Caco-2 (cell line): ENCODE measurements at regions of chr19 and their contacts with region 1.

Region 1: DNA sequence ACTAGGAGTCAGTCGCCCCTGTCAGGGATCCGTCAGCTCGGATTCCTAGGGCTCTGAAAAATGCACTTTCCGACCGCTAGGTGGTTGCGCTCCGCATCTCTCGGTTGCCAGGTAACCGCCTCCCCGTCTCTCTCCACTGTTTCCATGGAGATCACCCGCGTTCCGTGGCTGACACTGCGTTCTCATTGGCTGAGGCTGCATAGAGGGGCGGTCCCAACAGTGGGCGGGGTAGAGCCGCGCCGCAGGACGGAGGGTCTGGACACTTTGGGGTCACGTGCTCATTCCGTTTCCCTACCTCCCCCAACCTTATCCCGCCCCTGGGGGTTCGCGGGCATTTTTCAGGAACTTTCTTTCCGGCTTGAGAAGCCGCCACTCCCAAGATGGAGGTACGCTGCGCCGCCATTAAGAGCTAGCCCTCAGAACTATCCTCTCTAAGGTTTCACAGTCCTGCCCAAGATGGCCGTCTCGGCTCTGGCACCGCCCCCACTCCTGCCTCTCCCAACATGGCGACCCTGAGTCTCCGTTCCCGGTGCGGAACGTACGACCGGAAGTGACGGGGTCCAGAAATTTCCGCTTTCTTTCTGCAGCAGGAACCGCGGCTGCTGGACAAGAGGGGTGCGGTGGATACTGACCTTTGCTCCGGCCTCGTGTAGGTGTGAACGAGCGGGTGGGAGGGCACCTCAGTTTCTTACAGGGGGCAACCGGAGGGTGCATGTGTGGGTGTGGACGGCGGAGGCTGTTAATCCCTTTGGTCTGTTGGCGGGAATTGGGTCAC is at the starts of genes ODAD3 and PRKCSH:
- DNase-seq: peak; percentile 99
- H3K4me3 ChIP-seq: peak within 1 kb of the TSS; percentile 86
- H3K4me3 Mint-ChIP-seq: peak within 1 kb of the TSS; percentile 100
- H3K27ac Mint-ChIP-seq: peak within 1 kb of the TSS; percentile 100
- H3K4me1 ChIP-seq: 0 out of 2 replicates have a peak, but pooled peaks cover 3% of the 10 kb centered on the region
- H3K4me1 Mint-ChIP-seq: no peaks in the 10 kb centered on the region
- H3K27me3 ChIP-seq: no peaks in the 10 kb centered on the region
- H3K27me3 Mint-ChIP-seq: no peaks in the 10 kb centered on the region
- CTCF ChIP-seq: peak; percentile 84 to 90
- total RNA-seq, gene ODAD3: not detected in 2 replicates
- total RNA-seq, gene PRKCSH: 412 and 456 TPM in 2 replicates

Region 2: DNA sequence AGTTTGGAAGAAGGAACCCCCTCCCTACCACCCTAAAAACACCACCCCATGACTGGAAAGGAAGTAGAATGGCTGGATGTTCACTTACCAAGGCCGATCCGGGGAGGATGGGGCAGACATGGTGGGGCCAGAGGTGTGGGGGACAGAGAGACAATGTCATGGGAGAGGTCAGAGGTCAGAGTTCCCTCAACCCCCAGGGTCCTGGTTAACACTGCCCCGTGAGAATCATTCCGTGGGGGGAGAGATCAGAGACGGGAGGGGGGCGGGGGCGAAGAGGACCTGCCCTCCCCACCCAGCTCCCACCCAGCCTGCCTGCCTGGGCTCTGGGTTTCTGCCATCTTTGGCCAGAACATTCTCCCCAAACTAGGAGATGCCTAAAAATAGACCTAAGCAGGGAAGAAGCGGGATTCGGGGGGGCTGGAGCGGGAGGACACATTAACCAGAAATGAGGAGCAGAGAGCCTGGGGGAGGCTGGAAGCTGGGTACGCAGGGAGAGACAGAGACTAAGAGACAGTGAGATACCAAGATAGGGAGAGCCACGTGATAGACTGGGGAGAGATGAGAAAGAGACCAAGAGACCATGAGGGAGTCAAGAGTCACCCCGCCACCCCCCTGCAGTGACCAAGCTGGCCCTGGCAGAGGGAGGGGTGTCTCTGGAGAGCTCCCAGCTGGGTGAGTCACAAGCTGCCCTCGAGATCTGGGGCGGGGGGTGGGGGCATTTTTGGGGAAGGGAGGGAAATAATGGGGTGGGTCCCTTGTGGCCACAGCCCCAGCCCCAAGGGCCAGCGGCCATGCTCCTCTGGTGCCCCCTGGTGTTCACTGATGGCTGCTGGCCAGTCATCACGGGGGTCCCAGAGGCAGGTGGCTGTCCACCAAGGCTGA is 231.8 kb before region 1 on chr19:
- CTCF ChIA-PET with region 1: no interaction called
- POLR2A ChIA-PET with region 1: no interaction called
- intact Hi-C with region 1: no loop called
- DNase-seq: peak in 1 of 2 experiments; percentile 73
- H3K4me3 ChIP-seq: no peak overlapping the region
- H3K4me3 Mint-ChIP-seq: no peak overlapping the region
- H3K27ac Mint-ChIP-seq: no peak overlapping the region
- H3K4me1 ChIP-seq: no peaks in the 10 kb centered on the region
- H3K4me1 Mint-ChIP-seq: peaks cover 6% of the 10 kb centered on the region
- H3K27me3 ChIP-seq: no peaks in the 10 kb centered on the region
- H3K27me3 Mint-ChIP-seq: no peaks in the 10 kb centered on the region
- CTCF ChIP-seq: peak; percentile 81 to 84

Region 3: DNA sequence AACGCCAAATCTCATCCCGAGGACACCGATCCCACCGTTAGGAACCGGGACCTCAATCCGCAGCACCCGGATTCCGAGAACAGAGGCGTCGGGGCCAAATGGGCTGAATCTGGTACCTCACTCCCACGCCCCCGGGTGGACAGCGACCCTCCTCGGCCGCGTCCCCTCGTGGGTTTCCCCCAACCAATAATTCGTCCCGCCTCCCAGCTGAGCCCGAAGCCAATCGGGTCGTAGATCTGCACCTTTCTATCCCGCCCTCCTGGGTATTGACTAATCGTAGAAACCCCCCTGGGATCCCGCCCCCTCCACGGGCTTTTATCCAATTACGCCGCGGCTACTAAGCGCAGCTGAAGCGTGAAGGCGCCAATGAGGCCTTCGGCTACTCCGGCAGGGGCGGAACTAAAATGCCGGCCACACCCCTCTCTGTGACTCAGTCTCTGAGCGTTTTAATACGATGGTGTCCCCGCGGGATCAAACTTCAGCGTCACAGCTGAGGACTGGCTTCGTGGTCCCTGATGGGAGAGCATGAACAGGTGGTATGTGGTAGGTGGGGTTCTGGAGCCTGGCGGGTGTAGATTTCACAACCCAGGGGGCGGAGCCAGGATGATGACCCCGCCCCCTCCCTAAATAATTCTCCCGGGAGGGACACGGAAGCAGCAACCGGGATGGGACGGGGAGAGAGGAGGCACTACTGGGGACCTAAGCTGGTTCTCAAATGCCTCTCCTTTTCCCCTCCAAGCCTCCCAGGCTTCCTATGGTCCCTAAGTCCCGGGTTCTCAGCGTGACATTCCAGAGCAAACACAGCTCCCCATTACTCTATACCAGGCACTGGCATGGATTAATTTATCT is 88.9 kb before region 1 on chr19 and contains the starts of genes CCDC159 and TMEM205:
- CTCF ChIA-PET with region 1: interaction called, 4 read pairs
- POLR2A ChIA-PET with region 1: no interaction called
- intact Hi-C with region 1: loop called (anchors 1 kb)
- DNase-seq: peak; percentile 97 to 98
- H3K4me3 ChIP-seq: peak within 1 kb of the TSS; percentile 47
- H3K4me3 Mint-ChIP-seq: peak within 1 kb of the TSS; percentile 94
- H3K27ac Mint-ChIP-seq: peak within 1 kb of the TSS; percentile 92
- H3K4me1 ChIP-seq: peaks cover 17% of the 10 kb centered on the region
- H3K4me1 Mint-ChIP-seq: peaks cover 29% of the 10 kb centered on the region
- H3K27me3 ChIP-seq: no peaks in the 10 kb centered on the region
- H3K27me3 Mint-ChIP-seq: no peaks in the 10 kb centered on the region
- CTCF ChIP-seq: peak in 1 of 2 experiments; percentile 1
- total RNA-seq, gene CCDC159: 11.7 and 13.9 TPM in 2 replicates
- total RNA-seq, gene TMEM205: 68.3 and 76.1 TPM in 2 replicates

Region 4: GRCh38 chr19:11374433-11375142 is 60.7 kb before region 1 on chr19 and contains the start of gene SWSAP1:
- CTCF ChIA-PET with region 1: interaction called, 14 read pairs
- POLR2A ChIA-PET with region 1: interaction called, 14 read pairs
- intact Hi-C with region 1: no loop called
- DNase-seq: peak; percentile 97 to 98
- H3K4me3 ChIP-seq: peak within 1 kb of the TSS; percentile 85
- H3K4me3 Mint-ChIP-seq: peak within 1 kb of the TSS; percentile 41
- H3K27ac Mint-ChIP-seq: peak within 1 kb of the TSS; percentile 8
- H3K4me1 ChIP-seq: peaks cover 10% of the 10 kb centered on the region; the same call in 1 of the 2 replicates
- H3K4me1 Mint-ChIP-seq: no peaks in the 10 kb centered on the region
- H3K27me3 ChIP-seq: no peaks in the 10 kb centered on the region
- H3K27me3 Mint-ChIP-seq: no peaks in the 10 kb centered on the region
- CTCF ChIP-seq: no peak
- total RNA-seq, gene SWSAP1: 3.7 and 3.9 TPM in 2 replicates

Region 5: GRCh38 chr19:11390933-11391680 is 44.1 kb before region 1 on chr19:
- CTCF ChIA-PET with region 1: interaction called, 11 read pairs
- POLR2A ChIA-PET with region 1: no interaction called
- intact Hi-C with region 1: no loop called
- DNase-seq: no peak
- H3K4me3 ChIP-seq: no peak overlapping the region
- H3K4me3 Mint-ChIP-seq: no peak overlapping the region
- H3K27ac Mint-ChIP-seq: no peak overlapping the region
- H3K4me1 ChIP-seq: no peaks in the 10 kb centered on the region
- H3K4me1 Mint-ChIP-seq: peaks cover 6% of the 10 kb centered on the region
- H3K27me3 ChIP-seq: no peaks in the 10 kb centered on the region
- H3K27me3 Mint-ChIP-seq: no peaks in the 10 kb centered on the region
- CTCF ChIP-seq: no peak

Region 6: GRCh38 chr19:11418549-11419506 is 16.4 kb before region 1 on chr19 and contains the start of gene RGL3:
- CTCF ChIA-PET with region 1: interaction called, 17 read pairs
- POLR2A ChIA-PET with region 1: interaction called, 7 read pairs
- intact Hi-C with region 1: no loop called
- DNase-seq: peak; percentile 81 to 84
- H3K4me3 ChIP-seq: peak within 1 kb of the TSS; percentile 58
- H3K4me3 Mint-ChIP-seq: peak within 1 kb of the TSS; percentile 92
- H3K27ac Mint-ChIP-seq: peak within 1 kb of the TSS; percentile 89
- H3K4me1 ChIP-seq: no peaks in the 10 kb centered on the region
- H3K4me1 Mint-ChIP-seq: peaks cover 6% of the 10 kb centered on the region
- H3K27me3 ChIP-seq: no peaks in the 10 kb centered on the region
- H3K27me3 Mint-ChIP-seq: no peaks in the 10 kb centered on the region
- CTCF ChIP-seq: no peak
- total RNA-seq, gene RGL3: 53.1 and 58.8 TPM in 2 replicates

Region 7: DNA sequence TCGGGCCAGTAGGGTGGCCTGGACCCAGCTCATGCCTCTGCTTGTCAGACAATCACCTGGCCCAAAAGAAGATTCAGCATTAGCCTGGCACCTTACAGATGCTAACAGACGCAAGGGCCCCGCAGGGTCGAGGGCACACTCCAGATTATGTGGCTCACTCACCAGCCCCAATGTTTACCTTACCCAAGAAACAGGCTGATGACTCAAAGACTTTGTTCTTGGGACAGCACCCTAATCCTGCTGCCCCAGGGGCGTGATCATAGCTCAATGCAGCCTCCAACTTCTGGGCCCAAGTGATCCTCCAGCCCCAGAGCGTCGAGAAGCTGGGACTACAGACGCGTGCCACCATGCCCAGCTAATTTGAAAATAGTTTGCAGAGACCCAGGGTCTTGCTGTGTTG is 83.9 kb after region 1 on chr19:
- CTCF ChIA-PET with region 1: no interaction called
- POLR2A ChIA-PET with region 1: no interaction called
- intact Hi-C with region 1: no loop called
- DNase-seq: no peak
- H3K4me3 ChIP-seq: no peak overlapping the region
- H3K4me3 Mint-ChIP-seq: no peak overlapping the region
- H3K27ac Mint-ChIP-seq: no peak overlapping the region
- H3K4me1 ChIP-seq: no peaks in the 10 kb centered on the region
- H3K4me1 Mint-ChIP-seq: no peaks in the 10 kb centered on the region
- H3K27me3 ChIP-seq: no peaks in the 10 kb centered on the region
- H3K27me3 Mint-ChIP-seq: no peaks in the 10 kb centered on the region
- CTCF ChIP-seq: no peak